Common myeloid progenitor, CD34-positive (primary cell): ENCODE measurements at regions of chr13 and their contacts with region 1.

Region 1: DNA sequence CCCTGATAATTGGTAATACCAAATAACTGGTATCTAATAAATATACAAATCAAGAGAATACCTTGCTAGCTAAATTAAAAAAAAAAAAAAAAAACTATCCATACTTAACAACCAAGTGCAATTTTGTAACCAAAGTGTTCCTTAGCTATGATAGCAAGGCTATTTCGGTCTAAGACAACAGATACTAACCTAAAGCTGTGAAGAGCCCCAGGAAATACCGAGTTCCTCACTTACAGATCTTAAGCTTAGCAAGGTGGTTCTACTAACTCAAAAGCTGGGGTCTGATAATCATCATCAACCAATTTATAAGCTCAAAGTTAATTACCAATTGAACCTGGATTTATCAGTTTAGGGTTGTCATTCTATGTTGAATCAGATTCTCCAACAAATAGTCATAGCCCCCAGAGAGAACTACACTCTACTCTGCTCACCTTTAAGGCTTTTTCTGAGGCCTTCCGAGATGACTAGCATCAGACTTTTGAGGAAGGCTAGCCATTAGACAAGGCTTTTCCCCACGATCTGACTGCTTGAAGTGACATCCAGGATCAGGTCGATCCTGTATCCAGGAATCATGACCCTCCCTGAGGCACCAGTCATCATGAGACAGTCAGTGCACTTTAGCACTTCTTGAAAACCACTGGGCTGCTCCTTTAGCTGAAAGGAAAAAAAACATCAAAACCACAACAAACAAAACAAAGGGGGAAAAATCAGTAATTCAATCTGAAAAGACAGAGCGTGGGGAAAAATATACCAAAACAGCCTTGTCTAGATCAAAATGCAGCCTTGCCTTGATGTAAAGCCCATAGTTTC is 31.9 kb downstream of the INTS6 start:
- DNase-seq: no peak
- H3K4me3 ChIP-seq: no peak overlapping the region
- H3K27ac ChIP-seq: no peak overlapping the region
- H3K4me1 ChIP-seq: peaks cover 0 to 4% (median 0%) of the 10 kb centered on the region in 4 experiments
- H3K27me3 ChIP-seq: no peaks in the 10 kb centered on the region

Region 2: DNA sequence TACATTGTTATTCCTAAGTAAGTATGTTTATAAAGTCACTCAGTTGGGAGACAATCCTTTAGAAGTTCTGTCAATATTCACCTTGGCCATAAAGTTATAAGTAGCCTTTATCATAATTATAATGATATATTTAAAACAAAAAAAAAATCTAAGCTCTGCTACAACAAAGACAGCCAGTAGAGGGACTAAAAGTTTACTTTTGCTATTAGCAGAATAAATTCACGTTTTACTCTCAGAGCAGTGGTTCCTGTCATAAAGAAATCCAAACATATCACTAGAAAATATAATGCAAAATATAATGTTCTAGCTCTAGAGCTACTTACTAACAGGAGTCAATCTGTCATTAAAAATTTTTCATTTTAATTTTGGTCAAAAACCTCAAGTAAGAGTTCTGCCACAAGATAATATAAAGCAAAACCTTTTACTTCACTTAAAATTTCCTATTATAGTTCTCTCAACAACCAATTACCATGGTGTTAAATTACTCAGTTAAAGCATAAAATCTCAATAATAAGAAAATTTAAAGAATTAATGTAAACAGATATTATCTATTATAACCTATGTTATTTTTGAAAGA is 14.2 kb after region 1 on chr13:
- CTCF ChIA-PET with region 1: interaction called, 19 read pairs
- POLR2A ChIA-PET with region 1: no interaction called
- DNase-seq: peak; percentile 36 to 66 (median 62)
- H3K4me3 ChIP-seq: no peak overlapping the region
- H3K27ac ChIP-seq: no peak overlapping the region
- H3K4me1 ChIP-seq: no peaks in the 10 kb centered on the region
- H3K27me3 ChIP-seq: no peaks in the 10 kb centered on the region

Region 3: GRCh38 chr13:51861723-51862300 is 440.9 kb after region 1 on chr13 and contains the start of gene CCDC70:
- CTCF ChIA-PET with region 1: no interaction called
- POLR2A ChIA-PET with region 1: no interaction called
- DNase-seq: peak in 1 of 3 donors; percentile 34
- H3K4me3 ChIP-seq: no peak within 1 kb of the TSS
- H3K27ac ChIP-seq: no peak within 1 kb of the TSS
- H3K4me1 ChIP-seq: peaks cover 2 to 18% (median 9%) of the 10 kb centered on the region in 4 experiments
- H3K27me3 ChIP-seq: no peaks in the 10 kb centered on the region